Heart right ventricle (tissue), 16 donors: ENCODE measurements at regions of chr3 and their contacts with region 1.

Region 1: GRCh38 chr3:189961525-189962161 is 159.1 kb downstream of the P3H2 start:
- DNase-seq: peak; percentile 60 to 76
- ATAC-seq: peak; percentile 71 to 88 (median 78)
- H3K4me3 ChIP-seq: no peak overlapping the region
- H3K27ac ChIP-seq: peak overlapping the region in 2 of 10 donors; percentile 3 to 19
- H3K4me1 ChIP-seq: peaks cover 0 to 11% (median 5%) of the 10 kb centered on the region in 9 donors
- H3K27me3 ChIP-seq: peaks cover 0 to 19% (median 0%) of the 10 kb centered on the region in 7 donors
- CTCF ChIP-seq: peak; percentile 83 to 96 (median 92)

Region 2: GRCh38 chr3:190120269-190121060 is 158.8 kb after region 1 on chr3 and contains the start of gene P3H2:
- intact Hi-C with region 1: loop called in 3 of 10 experiments (anchors 5 to 10 kb)
- DNase-seq: peak; percentile 76 to 80
- ATAC-seq: peak; percentile 98 to 100 (median 99)
- H3K4me3 ChIP-seq: peak within 1 kb of the TSS; percentile 36 to 89 (median 70)
- H3K27ac ChIP-seq: peak within 1 kb of the TSS in 7 of 10 donors; percentile 52 to 77 (median 72)
- H3K4me1 ChIP-seq: peaks cover 2 to 17% (median 7%) of the 10 kb centered on the region in 9 donors
- H3K27me3 ChIP-seq: peaks cover 0 to 57% (median 8%) of the 10 kb centered on the region in 7 donors
- CTCF ChIP-seq: peak in 8 of 9 donors; percentile 17 to 72 (median 56)
- total RNA-seq, gene P3H2: 0.49 to 28.8 (median 4.4) TPM

Region 3: GRCh38 chr3:190205739-190206138 is 244.1 kb after region 1 on chr3:
- intact Hi-C with region 1: loop called (anchors 2 to 5 kb)
- DNase-seq: no peak
- ATAC-seq: no peak
- H3K4me3 ChIP-seq: no peak overlapping the region
- H3K27ac ChIP-seq: no peak overlapping the region
- H3K4me1 ChIP-seq: peaks cover 0 to 10% (median 0%) of the 10 kb centered on the region in 9 donors
- H3K27me3 ChIP-seq: no peaks in the 10 kb centered on the region
- CTCF ChIP-seq: no peak

Region 4: GRCh38 chr3:190321789-190322603 is 360.4 kb after region 1 on chr3 and contains the start of gene CLDN1:
- intact Hi-C with region 1: loop called in 8 of 10 experiments (anchors 1 to 10 kb)
- DNase-seq: peak; percentile 72 to 81
- ATAC-seq: peak; percentile 89 to 96 (median 94)
- H3K4me3 ChIP-seq: peak within 1 kb of the TSS; percentile 38 to 68 (median 58)
- H3K27ac ChIP-seq: no peak within 1 kb of the TSS
- H3K4me1 ChIP-seq: peaks cover 0 to 25% (median 12%) of the 10 kb centered on the region in 9 donors
- H3K27me3 ChIP-seq: peaks cover 0 to 33% (median 13%) of the 10 kb centered on the region in 7 donors
- CTCF ChIP-seq: peak in 8 of 9 donors; percentile 91 to 99 (median 96)
- total RNA-seq, gene CLDN1: 0.10 to 0.78 (median 0.17) TPM in 8 of 10 donors, not detected in the others